ENCODE measurements at regions of chr12 and their contacts with region 1.

Region 1: DNA sequence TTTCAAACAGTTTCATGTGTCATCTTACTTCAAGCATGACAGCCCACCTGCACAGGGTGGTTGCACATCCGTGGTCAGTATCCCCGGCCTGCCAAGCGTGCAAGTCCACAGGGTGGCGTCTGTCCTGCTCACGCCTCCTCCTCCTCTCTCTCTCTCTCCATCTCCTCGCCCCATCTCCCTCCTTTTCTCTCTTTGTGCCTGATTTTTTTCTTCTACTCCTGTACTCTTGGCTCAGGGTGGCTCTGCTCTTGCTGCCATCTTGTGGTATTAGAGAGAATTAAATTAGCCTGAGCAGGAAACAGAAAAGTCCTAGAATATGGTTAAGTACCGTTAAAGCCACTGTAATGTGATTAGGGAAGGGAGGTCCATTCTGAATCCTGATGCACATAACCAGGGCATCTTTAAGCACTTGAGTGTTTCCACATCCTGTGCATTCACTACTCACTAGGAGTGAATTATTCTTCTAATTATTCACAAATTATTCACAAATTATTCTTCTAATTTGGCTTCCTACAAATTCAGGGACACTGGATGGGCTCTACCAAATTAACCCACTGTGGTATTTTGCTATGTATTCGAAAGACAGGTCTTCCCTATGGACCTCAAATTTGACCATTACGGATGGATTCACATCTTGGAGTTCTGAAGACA is 25.5 kb upstream of the DTX1 start:
- DNase-seq: peak; percentile 61
- H3K4me3 ChIP-seq: no peak overlapping the region
- H3K4me3 Mint-ChIP-seq: no peak overlapping the region
- H3K27ac Mint-ChIP-seq: no peak overlapping the region
- H3K4me1 ChIP-seq: no peaks in the 10 kb centered on the region
- H3K4me1 Mint-ChIP-seq: no peaks in the 10 kb centered on the region
- H3K27me3 ChIP-seq: no peaks in the 10 kb centered on the region
- H3K27me3 Mint-ChIP-seq: peaks cover 6% of the 10 kb centered on the region
- CTCF ChIP-seq: peak; percentile 55 to 66

Region 2: DNA sequence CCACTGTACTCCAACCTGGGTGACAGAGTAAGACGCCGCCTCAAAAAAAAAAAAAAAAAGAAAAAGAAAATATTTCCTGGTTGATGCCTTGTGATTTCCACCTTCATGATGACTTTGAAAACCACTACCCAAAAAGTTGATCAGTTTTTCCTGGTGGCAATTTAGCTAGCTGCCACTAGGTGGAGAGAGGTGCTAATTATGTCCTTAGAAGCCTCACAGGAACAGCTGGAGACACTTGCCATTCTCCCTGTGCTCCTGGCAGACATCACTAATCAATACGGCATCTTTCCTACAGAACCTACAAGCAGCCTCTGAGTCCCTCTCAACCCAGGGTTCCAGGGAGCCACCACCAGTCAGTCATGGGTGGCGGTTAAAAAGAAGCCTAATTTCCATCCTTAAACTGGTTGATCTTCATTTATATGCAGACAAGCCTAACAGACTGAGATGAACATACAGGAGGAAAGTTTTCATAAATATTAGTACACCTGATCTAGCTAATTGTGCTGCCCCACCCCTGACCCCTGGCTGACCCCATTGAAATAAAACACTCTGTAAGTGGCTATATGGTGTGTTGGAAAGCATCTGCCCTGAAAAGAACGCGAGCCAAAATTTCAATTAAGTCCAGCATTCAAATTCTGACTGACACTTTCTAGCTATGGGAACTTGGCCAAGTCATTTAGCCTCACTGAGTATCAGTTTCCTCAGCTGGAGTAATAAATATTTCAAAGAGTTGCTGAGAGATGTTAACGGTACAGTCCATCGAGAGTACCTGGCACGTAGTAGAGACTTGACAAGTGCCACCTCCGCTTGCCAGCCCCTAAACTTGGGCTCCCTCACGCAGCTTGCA is 130.5 kb before region 1 on chr12:
- CTCF ChIA-PET with region 1: interaction called, 4 read pairs
- POLR2A ChIA-PET with region 1: no interaction called
- intact Hi-C with region 1: loop called (anchors 1 kb)
- DNase-seq: peak; percentile 49 to 56
- H3K4me3 ChIP-seq: no peak overlapping the region
- H3K4me3 Mint-ChIP-seq: no peak overlapping the region
- H3K27ac Mint-ChIP-seq: no peak overlapping the region
- H3K4me1 ChIP-seq: no peaks in the 10 kb centered on the region
- H3K4me1 Mint-ChIP-seq: no peaks in the 10 kb centered on the region
- H3K27me3 ChIP-seq: no peaks in the 10 kb centered on the region
- H3K27me3 Mint-ChIP-seq: peaks cover 14% of the 10 kb centered on the region
- CTCF ChIP-seq: peak; percentile 63 to 72

Region 3: DNA sequence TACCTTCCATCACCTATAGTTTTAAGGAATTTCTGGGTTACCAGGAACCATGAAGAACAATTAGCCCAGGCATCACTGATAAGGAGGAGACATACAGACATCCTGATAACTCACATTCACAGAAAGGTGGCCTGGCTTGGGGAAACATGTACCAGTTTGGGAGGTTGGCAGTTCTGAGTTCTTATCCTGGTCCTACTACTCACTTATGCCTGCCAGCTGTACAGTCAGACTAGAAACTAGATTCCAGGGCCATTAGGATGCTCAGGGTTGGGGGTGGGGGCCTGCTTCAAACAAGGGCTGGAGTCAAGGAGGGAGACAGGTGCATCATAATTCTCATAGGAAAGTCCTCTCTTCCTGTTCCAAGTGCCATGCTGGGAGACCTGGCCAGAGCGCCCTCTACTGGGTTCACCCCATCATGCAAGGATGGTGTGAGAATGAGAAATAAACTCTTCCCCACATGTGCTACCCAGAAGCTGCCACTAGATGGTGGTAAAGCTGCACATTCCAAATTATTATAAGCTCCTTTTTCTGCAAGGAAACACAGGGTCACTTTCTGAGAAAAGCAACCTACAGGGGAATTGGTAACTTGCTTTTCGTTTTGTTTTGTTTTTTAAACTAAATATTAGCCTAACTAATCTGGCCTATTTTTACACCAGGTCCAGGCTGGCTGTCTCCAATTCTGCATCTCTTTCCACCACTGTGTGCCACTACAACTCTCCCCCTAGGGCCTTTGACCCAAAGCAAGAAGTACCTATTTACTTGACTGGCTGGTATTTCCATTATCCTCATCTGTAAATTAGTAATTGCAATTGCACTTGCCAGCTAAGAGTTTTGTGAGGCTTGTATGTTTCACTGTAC is 38.2 kb before region 1 on chr12:
- CTCF ChIA-PET with region 1: interaction called, 12 read pairs
- POLR2A ChIA-PET with region 1: no interaction called
- intact Hi-C with region 1: loop called (anchors 1 kb)
- DNase-seq: peak; percentile 56 to 67
- H3K4me3 ChIP-seq: no peak overlapping the region
- H3K4me3 Mint-ChIP-seq: no peak overlapping the region
- H3K27ac Mint-ChIP-seq: no peak overlapping the region
- H3K4me1 ChIP-seq: no peaks in the 10 kb centered on the region
- H3K4me1 Mint-ChIP-seq: peaks cover 6% of the 10 kb centered on the region
- H3K27me3 ChIP-seq: no peaks in the 10 kb centered on the region
- H3K27me3 Mint-ChIP-seq: no peaks in the 10 kb centered on the region
- CTCF ChIP-seq: peak; percentile 77 to 83

Region 4: DNA sequence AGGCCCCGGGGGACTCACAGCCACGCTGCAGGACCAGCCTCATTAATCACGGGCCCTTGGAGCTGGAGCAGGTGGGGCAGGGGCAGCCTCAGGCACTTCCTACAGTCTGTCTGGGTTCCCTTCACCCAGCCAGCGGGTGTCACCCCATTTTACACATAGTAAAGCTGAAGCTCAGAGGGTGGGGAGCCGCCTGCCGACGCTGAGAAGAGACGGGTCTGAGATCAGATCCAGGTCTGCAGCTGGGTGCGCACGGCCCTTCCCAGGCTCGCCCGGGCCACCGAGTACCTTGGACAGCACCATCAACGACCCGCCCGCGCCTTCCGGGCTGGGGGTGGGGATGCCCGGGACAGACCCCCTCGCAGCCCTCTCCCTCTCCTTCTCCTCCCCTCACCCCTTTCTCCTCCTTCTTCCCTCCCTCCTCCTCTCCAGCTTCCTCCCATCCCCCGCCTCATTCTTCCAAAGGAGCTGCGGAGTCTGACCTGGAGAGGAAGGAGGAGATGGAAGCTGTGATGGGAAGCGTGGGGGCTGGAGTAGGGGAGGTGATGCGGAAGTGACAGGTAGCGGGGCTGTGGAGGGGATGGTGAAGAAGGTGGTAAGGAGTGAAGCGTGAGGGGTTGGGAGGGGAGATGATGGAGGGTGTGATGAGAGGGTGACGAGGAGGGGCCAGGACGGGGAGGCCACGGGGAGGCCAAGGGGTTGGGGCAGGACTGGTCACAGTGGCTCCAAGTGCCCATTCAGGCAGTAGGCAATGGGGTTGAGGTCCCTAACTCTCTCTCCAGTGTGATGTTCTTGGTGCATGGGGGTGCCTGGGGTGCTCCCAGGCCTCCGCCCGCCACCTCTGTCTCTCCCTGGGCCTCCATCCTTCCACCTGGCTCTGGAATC is 34.4 kb after region 1 on chr12:
- CTCF ChIA-PET with region 1: no interaction called
- POLR2A ChIA-PET with region 1: no interaction called
- intact Hi-C with region 1: no loop called
- DNase-seq: peak in 1 of 2 experiments; percentile 46
- H3K4me3 ChIP-seq: no peak overlapping the region
- H3K4me3 Mint-ChIP-seq: no peak overlapping the region
- H3K27ac Mint-ChIP-seq: no peak overlapping the region
- H3K4me1 ChIP-seq: no peaks in the 10 kb centered on the region
- H3K4me1 Mint-ChIP-seq: no peaks in the 10 kb centered on the region
- H3K27me3 ChIP-seq: no peaks in the 10 kb centered on the region
- H3K27me3 Mint-ChIP-seq: peaks cover 3% of the 10 kb centered on the region
- CTCF ChIP-seq: no peak

Measured in Caco-2 (cell line).